ENCODE measurements at regions of chr1 and their contacts with region 1.

Region 1: GRCh38 chr1:40691538-40692428 is at the start of gene NFYC:
- DNase-seq: peak; percentile 95
- CTCF ChIP-seq: no peak

Region 2: GRCh38 chr1:40668769-40669525 is 22.8 kb before region 1 on chr1:
- CTCF ChIA-PET with region 1: interaction called, 34 read pairs
- POLR2A ChIA-PET with region 1: no interaction called
- DNase-seq: peak; percentile 89
- CTCF ChIP-seq: peak; percentile 93

Region 3: GRCh38 chr1:40703316-40703715 is 11.5 kb after region 1 on chr1:
- CTCF ChIA-PET with region 1: interaction called, 27 read pairs
- POLR2A ChIA-PET with region 1: interaction called, 17 read pairs
- DNase-seq: no peak
- CTCF ChIP-seq: no peak

Region 4: GRCh38 chr1:40709100-40709801 is 17.5 kb after region 1 on chr1:
- CTCF ChIA-PET with region 1: interaction called, 27 read pairs
- POLR2A ChIA-PET with region 1: interaction called, 3 read pairs
- DNase-seq: peak; percentile 79
- CTCF ChIP-seq: no peak

Measured in GM10248 (cell line).